ENCODE measurements at regions of chr1 and their contacts with region 1.

Region 1: GRCh38 chr1:201792534-201793305 is 36.2 kb upstream of the IPO9 start:
- DNase-seq: peak; percentile 66
- ATAC-seq: peak; percentile 82
- H3K4me3 Mint-ChIP-seq: no peak overlapping the region
- H3K27ac Mint-ChIP-seq: no peak overlapping the region
- H3K4me1 Mint-ChIP-seq: peaks cover 9% of the 10 kb centered on the region
- H3K27me3 Mint-ChIP-seq: no peaks in the 10 kb centered on the region
- CTCF ChIP-seq: peak; percentile 94

Region 2: DNA sequence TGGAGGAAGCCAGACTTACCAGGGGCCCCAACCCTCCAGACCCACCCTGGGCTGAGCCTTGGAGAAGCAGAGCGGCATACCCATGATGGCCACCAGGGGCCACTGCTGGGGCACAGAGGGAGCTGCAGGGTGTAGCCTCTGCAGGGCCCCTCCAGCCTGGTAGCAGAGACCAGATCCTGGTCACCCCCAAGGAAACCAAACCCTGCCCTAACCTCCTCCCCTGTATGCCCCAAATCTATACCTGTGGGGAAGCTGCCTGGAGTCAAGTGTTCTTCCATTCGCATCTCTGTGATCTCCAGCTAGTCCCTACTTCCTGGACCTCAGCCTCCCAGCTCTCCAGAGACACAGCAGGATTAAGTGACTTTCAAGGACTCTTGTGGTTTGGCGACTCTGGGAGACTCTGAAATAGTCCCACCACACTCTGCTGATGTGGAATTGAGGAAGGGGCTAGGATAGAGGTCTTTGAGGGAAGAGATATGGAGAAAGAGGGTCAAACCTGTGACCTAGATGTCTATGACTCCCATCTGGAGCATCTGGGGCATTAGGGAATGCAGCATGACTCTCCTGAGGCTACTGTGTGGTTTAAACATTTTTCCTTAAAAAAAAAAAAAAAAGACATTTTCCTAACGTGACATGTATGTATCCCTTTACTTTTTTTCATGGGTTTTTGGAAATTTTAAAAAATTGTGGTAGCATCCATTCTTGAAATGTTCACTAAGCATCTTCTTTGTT is 83.0 kb before region 1 on chr1:
- CTCF ChIA-PET with region 1: interaction called, 258 read pairs
- POLR2A ChIA-PET with region 1: no interaction called
- intact Hi-C with region 1: loop called (anchors 2 kb)
- DNase-seq: peak; percentile 76
- ATAC-seq: peak; percentile 99
- H3K4me3 Mint-ChIP-seq: no peak overlapping the region
- H3K27ac Mint-ChIP-seq: no peak overlapping the region
- H3K4me1 Mint-ChIP-seq: no peaks in the 10 kb centered on the region
- H3K27me3 Mint-ChIP-seq: peaks cover 2% of the 10 kb centered on the region
- CTCF ChIP-seq: peak; percentile 82

Region 3: DNA sequence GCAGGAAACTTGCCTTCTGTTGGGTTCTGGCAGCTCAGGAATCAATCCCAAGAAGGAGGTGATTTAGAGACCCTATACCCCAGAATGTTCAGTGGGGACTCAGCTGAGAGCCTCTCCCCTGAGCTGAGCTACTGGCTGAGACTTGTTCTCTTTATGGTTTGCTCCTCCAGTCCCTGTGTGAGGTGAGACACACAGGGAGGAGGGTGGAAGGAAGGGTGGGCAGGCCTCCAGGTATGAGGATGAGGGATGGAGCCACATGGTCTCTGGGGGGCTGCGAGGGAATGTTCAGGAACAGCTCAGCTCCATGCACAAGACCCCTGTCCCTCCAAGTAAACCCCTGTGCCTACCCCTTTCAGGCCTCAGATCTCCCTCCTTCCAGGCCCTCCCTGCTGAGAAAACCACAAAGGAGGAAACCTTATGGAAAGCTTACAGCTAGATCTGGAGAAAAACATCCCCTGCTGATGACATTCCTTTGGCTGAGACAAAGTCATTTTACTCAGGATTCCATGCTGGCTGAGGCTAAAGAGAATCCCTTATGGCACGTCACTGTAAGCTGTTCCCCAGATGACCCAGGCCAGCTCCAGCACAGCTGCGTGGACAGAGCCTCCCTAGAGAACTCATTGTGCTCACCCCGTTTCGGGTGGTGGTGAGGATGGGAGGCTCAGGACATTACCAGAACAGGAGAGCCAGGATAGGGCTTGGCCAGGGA is 55.2 kb before region 1 on chr1:
- CTCF ChIA-PET with region 1: interaction called, 10 read pairs
- POLR2A ChIA-PET with region 1: no interaction called
- intact Hi-C with region 1: no loop called
- DNase-seq: no peak
- ATAC-seq: no peak
- H3K4me3 Mint-ChIP-seq: no peak overlapping the region
- H3K27ac Mint-ChIP-seq: no peak overlapping the region
- H3K4me1 Mint-ChIP-seq: peaks cover 9% of the 10 kb centered on the region
- H3K27me3 Mint-ChIP-seq: peaks cover 22% of the 10 kb centered on the region
- CTCF ChIP-seq: no peak

Region 4: DNA sequence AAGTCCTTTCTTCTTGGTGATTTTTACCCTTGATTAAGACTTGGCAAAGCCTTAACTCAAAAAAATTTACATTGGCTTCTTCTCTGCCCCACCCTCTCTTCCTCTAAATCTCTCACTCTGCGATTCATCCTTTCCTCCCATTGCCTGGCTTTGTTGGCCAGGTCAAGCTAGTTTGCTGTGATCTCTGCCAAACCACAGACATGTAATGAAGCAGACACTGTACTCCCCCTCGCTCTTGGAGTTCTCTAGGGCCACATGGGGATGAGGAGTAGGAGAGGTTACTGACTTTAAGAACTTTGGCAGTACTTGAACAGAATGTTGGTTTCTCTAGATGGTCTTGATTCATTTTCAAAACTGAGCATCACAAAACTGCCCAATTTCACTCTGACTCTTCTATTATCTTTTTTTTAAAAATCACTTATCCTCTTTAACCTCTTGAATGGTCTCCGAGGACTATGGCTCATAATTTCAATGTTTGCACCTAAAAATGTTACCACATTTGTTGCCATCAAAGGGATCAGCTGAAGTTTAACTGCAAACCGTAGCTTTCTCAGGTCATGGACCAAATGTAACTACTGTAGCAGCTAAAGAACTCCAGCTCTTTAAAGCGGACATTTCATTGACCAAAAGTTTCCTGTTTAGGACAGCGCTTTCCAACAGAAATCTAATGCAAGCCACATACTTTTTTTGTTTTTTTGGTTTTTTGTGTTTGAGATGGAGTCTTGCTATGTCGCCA is 26.4 kb before region 1 on chr1:
- CTCF ChIA-PET with region 1: interaction called, 14 read pairs
- POLR2A ChIA-PET with region 1: no interaction called
- intact Hi-C with region 1: no loop called
- DNase-seq: no peak
- ATAC-seq: no peak
- H3K4me3 Mint-ChIP-seq: no peak overlapping the region
- H3K27ac Mint-ChIP-seq: no peak overlapping the region
- H3K4me1 Mint-ChIP-seq: no peaks in the 10 kb centered on the region
- H3K27me3 Mint-ChIP-seq: peaks cover 4% of the 10 kb centered on the region
- CTCF ChIP-seq: no peak

Region 5: DNA sequence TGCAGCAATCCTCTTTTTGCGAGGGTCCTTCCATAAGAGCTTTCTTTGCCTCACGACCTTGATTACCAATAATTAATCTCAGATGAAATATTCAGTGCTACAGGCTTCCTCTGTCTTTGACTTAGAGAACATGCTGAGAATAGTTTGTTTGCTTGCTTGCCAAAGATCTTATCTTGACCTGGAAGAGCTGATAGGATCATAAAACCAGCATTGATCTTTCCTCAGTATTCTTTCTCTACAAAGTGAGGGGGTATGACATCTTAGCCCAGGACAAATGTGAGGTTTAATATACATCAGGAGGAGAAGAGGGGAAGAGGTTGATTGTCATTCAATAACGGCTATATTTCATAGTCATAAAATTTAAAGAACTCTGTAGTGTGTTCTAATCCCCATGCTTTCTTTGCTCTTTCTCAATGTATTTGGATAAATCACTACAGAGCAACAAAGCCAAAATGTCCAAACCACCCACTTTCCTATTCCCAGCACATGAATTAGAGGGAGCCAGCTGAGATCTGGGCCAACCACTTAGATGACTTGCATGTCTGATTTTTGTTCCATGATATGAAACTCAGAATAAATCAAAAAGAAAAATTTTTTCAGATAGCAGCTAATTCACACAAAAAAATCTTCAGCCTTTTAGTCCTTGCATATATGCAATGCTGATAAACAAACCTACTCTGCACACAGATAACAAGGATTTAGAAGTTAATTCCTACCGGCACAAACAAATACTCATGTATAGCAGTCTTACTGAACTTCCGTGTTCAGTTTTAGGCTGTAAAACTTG is 14.2 kb before region 1 on chr1:
- CTCF ChIA-PET with region 1: interaction called, 25 read pairs
- POLR2A ChIA-PET with region 1: no interaction called
- intact Hi-C with region 1: no loop called
- DNase-seq: no peak
- ATAC-seq: no peak
- H3K4me3 Mint-ChIP-seq: no peak overlapping the region
- H3K27ac Mint-ChIP-seq: no peak overlapping the region
- H3K4me1 Mint-ChIP-seq: no peaks in the 10 kb centered on the region
- H3K27me3 Mint-ChIP-seq: no peaks in the 10 kb centered on the region
- CTCF ChIP-seq: no peak

Region 6: GRCh38 chr1:201877877-201878401 is 85.2 kb after region 1 on chr1:
- CTCF ChIA-PET with region 1: no interaction called
- POLR2A ChIA-PET with region 1: no interaction called
- intact Hi-C with region 1: no loop called
- DNase-seq: peak; percentile 44
- ATAC-seq: peak; percentile 73
- H3K4me3 Mint-ChIP-seq: no peak overlapping the region
- H3K27ac Mint-ChIP-seq: peak overlapping the region; percentile 35
- H3K4me1 Mint-ChIP-seq: no peaks in the 10 kb centered on the region
- H3K27me3 Mint-ChIP-seq: no peaks in the 10 kb centered on the region
- CTCF ChIP-seq: peak; percentile 72

Measured in activated CD8-positive, alpha-beta T cell treated with anti-CD3 and anti-CD28 coated beads for 36 hours (primary cell).